Left ventricle myocardium inferior (tissue), 1 donor: ENCODE measurements at regions of chr19 and their contacts with region 1.

Region 1: DNA sequence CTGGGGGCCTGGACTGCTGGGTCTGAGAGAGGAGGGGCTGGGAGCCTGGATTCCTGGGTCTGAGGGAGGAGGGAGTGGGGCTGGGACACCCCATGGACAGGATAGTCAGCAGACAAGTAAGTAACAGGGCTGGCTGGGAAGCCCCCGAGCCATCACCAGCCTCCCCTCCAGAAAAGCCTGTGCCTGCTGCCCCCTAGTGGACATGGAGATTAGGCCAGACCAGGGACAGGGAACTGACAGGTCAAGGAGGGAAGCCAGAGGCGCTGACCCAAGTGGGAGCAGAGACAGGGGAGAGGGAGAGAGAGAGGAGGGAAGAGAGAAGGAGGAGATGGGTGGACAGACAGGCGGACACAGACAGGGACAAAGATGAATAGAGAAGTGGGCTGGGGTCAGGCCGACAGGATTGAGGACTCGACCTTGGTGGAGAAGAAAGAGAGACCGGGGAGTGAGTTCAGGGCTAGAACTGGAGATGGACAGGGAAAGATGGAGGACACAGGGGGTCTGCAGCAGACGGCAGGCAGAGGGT is 6.7 kb upstream of the ERFL start:
- DNase-seq: peak; percentile 56
- H3K4me3 ChIP-seq: no peak overlapping the region
- H3K27ac ChIP-seq: no peak overlapping the region
- H3K4me1 ChIP-seq: peaks cover 8% of the 10 kb centered on the region
- H3K27me3 ChIP-seq: peaks cover 87% of the 10 kb centered on the region
- CTCF ChIP-seq: peak; percentile 82

Region 2: DNA sequence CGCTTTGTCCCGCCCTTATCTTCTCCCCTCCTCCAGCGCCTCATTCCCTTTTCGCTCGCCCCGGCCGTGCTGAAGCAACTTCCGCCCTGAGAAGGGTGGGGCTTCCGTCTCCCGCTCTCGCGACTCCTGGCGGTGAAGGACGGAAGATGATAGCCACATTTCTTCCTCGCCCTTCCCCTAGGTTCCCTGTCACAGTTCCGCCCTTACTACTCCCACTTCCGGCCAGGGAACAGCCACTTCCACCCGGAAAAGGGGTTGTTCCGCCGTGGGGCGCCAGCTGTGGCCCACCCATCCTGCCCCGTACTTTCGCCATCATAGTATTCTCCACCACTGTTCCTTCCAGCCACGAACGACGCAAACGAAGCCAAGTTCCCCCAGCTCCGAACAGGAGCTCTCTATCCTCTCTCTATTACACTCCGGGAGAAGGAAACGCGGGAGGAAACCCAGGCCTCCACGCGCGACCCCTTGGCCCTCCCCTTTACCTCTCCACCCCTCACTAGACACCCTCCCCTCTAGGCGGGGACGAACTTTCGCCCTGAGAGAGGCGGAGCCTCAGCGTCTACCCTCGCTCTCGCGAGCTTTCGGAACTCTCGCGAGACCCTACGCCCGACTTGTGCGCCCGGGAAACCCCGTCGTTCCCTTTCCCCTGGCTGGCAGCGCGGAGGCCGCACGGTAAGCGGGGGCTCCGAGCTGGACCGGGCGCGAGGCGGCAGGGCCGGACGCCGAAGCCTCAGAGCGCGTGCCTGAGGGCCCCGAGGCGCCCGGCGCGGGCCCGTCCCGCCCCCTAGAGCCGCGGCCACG is 75.1 kb before region 1 on chr19 and contains the start of gene RPS19:
- intact Hi-C with region 1: loop called (anchors 10 kb)
- DNase-seq: peak; percentile 98
- H3K4me3 ChIP-seq: peak within 1 kb of the TSS; percentile 95
- H3K27ac ChIP-seq: peak within 1 kb of the TSS; percentile 99
- H3K4me1 ChIP-seq: peaks cover 47% of the 10 kb centered on the region
- H3K27me3 ChIP-seq: peaks cover 14% of the 10 kb centered on the region
- CTCF ChIP-seq: peak; percentile 76
- total RNA-seq, gene RPS19: 611 TPM

Region 3: GRCh38 chr19:42018503-42019193 is 83.7 kb after region 1 on chr19:
- intact Hi-C with region 1: no loop called
- DNase-seq: no peak
- H3K4me3 ChIP-seq: no peak overlapping the region
- H3K27ac ChIP-seq: no peak overlapping the region
- H3K4me1 ChIP-seq: peaks cover 13% of the 10 kb centered on the region
- H3K27me3 ChIP-seq: no peaks in the 10 kb centered on the region
- CTCF ChIP-seq: no peak